A673 (cell line): ENCODE measurements at regions of chr15 and their contacts with region 1.

Region 1: GRCh38 chr15:69265347-69265955 is 33.3 kb upstream of the PAQR5 start:
- DNase-seq: peak; percentile 59
- H3K4me3 ChIP-seq: no peak overlapping the region
- H3K27ac ChIP-seq: no peak overlapping the region
- H3K4me1 ChIP-seq: peaks cover 9% of the 10 kb centered on the region
- H3K27me3 ChIP-seq: no peaks in the 10 kb centered on the region
- CTCF ChIP-seq: peak; percentile 76

Region 2: DNA sequence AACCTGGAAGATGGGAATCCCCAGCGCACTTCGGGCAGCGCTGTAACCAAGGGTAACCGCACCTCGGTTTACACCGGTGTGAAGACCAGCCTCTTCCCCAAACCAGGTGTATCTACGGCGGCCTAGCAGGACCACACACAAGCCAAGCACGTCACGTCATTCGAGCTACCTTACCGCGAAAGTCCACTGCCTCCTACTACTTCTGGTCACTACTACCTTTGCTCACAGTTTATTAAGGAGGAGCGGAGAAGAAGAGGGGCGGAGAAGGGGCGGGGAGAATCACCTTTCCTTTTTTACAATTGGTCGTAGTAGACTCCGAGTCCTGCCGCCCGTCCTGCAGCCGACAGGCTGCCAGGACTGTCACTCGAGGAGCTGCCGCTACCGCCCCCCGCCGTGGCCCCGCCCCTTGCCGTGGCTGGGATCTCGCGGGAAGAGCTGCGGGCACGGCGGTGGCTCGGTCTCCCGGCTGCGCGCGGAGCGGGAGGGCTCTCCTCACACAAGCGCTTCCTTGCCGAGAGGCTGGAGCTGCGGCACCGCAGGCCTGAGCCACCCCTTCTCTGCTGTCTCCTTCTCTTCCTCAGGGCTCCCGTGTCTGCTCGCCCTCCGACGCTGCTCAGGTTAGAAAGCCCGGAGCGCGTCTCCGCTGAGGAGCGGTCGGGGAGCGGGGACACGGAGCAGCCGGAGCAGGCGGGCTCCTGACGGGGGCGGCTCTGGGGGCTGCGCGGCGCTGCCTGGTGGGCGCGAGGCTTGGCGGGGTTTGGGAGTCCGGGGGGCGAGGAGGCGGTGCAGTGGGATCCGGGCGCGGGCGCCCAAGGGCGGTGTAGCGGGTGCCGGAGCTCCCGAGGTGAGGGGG is 105.1 kb before region 1 on chr15 and contains the start of gene GLCE:
- CTCF ChIA-PET with region 1: no interaction called
- POLR2A ChIA-PET with region 1: no interaction called
- intact Hi-C with region 1: loop called (anchors 10 kb)
- DNase-seq: peak; percentile 98
- H3K4me3 ChIP-seq: peak within 1 kb of the TSS; percentile 96
- H3K27ac ChIP-seq: peak within 1 kb of the TSS; percentile 95
- H3K4me1 ChIP-seq: peaks cover 28% of the 10 kb centered on the region
- H3K27me3 ChIP-seq: no peaks in the 10 kb centered on the region
- CTCF ChIP-seq: no peak
- total RNA-seq, gene GLCE: 41.9 and 44.6 TPM in 2 replicates

Region 3: GRCh38 chr15:69232144-69232543 is 33.3 kb before region 1 on chr15:
- CTCF ChIA-PET with region 1: no interaction called
- POLR2A ChIA-PET with region 1: no interaction called
- intact Hi-C with region 1: loop called (anchors 2 kb)
- DNase-seq: peak; percentile 46
- H3K4me3 ChIP-seq: no peak overlapping the region
- H3K27ac ChIP-seq: no peak overlapping the region
- H3K4me1 ChIP-seq: peaks cover 16% of the 10 kb centered on the region
- H3K27me3 ChIP-seq: no peaks in the 10 kb centered on the region
- CTCF ChIP-seq: no peak